CD4-positive, alpha-beta T cell (primary cell): ENCODE measurements at regions of chr20 and their contacts with region 1.

Region 1: DNA sequence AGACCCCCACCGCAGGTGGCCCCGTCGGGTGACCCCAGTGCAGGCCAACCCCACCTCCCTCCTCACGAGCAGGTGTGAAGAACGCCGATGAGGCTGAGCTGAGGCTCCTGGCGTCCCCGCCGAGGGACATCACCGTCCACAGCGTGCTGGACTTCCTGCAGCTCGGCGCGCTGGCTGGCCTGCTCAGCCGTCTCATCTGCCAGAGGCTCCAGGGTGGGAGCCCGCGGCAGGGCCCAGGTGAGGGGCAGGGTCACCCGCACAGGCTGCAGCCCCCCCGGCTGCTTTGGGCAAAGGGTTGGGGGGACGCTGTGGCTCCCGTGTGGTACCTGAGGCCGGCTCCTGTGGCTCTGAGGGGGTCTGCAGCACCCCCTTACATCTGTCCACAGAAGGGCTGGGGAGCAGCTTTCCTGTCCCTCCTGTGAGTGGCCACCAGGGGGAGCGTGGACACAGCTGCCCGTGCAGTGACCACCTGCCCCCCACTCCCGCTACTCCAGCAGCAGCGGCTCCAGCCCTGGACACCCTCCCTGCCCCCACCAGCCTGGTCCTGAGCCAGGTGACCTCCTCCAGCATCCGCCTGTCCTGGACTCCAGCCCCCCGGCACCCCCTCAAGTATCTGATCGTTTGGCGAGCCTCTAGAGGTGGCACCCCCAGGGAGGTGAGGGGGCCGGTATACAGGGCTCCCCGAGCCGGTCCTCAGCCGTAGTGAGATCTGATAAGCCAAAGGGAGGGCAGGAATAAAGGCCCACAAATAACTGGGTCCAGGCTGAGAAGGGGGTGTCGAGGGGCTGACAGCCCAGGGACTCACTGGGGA is 16.5 kb downstream of the COL20A1 start:
- DNase-seq: peak in 7 of 14 experiments; percentile 12 to 58 (median 20)
- ATAC-seq: peak; percentile 17
- H3K4me3 ChIP-seq: no peak overlapping the region
- H3K4me3 Mint-ChIP-seq: no peak overlapping the region
- H3K27ac ChIP-seq: no peak overlapping the region
- H3K27ac Mint-ChIP-seq: no peak overlapping the region
- H3K4me1 ChIP-seq: no peaks in the 10 kb centered on the region
- H3K4me1 Mint-ChIP-seq: no peaks in the 10 kb centered on the region
- H3K27me3 ChIP-seq: peaks cover 0 to 24% of the 10 kb centered on the region in 2 experiments
- H3K27me3 Mint-ChIP-seq: peaks cover 4% of the 10 kb centered on the region
- CTCF ChIP-seq: peak; percentile 56

Region 2: DNA sequence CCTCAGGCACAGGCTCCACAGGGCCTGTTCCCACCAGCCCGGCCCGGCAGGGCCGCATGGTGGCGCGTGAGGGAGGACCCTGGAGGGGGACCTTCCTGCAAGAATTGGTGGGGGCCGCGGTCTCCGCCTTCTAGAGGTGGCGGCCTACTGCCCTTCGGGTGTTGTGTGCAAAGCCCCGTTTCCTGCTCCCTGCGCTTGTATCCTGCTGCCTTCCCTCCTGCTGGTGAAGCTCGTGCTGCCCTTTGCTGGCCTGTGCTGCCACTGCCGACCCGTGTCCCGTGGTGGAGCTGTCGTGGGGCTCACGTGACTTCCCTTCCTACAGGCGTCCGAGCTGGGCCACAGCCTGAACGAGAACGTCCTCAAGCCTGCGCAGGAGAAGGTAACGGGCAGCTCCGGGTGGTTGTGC is 24.9 kb before region 1 on chr20:
- CTCF ChIA-PET with region 1: no interaction called
- POLR2A ChIA-PET with region 1: interaction called, 4 read pairs
- intact Hi-C with region 1: loop called in 1 of 2 experiments (anchors 1 kb)
- DNase-seq: peak in 1 of 14 experiments; percentile 11
- ATAC-seq: peak; percentile 8
- H3K4me3 ChIP-seq: peak overlapping the region; percentile 51
- H3K4me3 Mint-ChIP-seq: peak overlapping the region; percentile 84
- H3K27ac ChIP-seq: no peak overlapping the region
- H3K27ac Mint-ChIP-seq: no peak overlapping the region
- H3K4me1 ChIP-seq: peaks cover 21% of the 10 kb centered on the region
- H3K4me1 Mint-ChIP-seq: peaks cover 4% of the 10 kb centered on the region
- H3K27me3 ChIP-seq: no peaks in the 10 kb centered on the region
- H3K27me3 Mint-ChIP-seq: no peaks in the 10 kb centered on the region
- CTCF ChIP-seq: no peak

Region 3: GRCh38 chr20:63457737-63458136 is 148.3 kb after region 1 on chr20:
- CTCF ChIA-PET with region 1: no interaction called
- POLR2A ChIA-PET with region 1: no interaction called
- intact Hi-C with region 1: no loop called
- DNase-seq: peak in 1 of 14 experiments; percentile 11
- ATAC-seq: no peak
- H3K4me3 ChIP-seq: no peak overlapping the region
- H3K4me3 Mint-ChIP-seq: no peak overlapping the region
- H3K27ac ChIP-seq: no peak overlapping the region
- H3K27ac Mint-ChIP-seq: no peak overlapping the region
- H3K4me1 ChIP-seq: peaks cover 23% of the 10 kb centered on the region
- H3K4me1 Mint-ChIP-seq: no peaks in the 10 kb centered on the region
- H3K27me3 ChIP-seq: peaks cover 23 to 27% of the 10 kb centered on the region in 2 experiments
- H3K27me3 Mint-ChIP-seq: peaks cover 21% of the 10 kb centered on the region
- CTCF ChIP-seq: no peak